ENCODE measurements at regions of chr1 and their contacts with region 1.

Region 1: GRCh38 chr1:205300886-205301821 is 20.4 kb downstream of the NUAK2 start:
- DNase-seq: peak; percentile 94
- ATAC-seq: peak; percentile 97
- H3K4me3 ChIP-seq: peak overlapping the region; percentile 11 to 59 (median 14)
- H3K27ac ChIP-seq: peak overlapping the region; percentile 74
- H3K4me1 ChIP-seq: peaks cover 54% of the 10 kb centered on the region
- H3K27me3 ChIP-seq: no peaks in the 10 kb centered on the region
- CTCF ChIP-seq: 0 out of 2 replicates have a peak, but pooled peaks have one; percentile 19
- EP300 ChIP-seq: peak; percentile 77 to 82
- POLR2A ChIP-seq: peak in 1 of 2 experiments; percentile 42; a peak in 1 of 4 replicates
- RAD21 ChIP-seq: peak; percentile 77

Region 2: DNA sequence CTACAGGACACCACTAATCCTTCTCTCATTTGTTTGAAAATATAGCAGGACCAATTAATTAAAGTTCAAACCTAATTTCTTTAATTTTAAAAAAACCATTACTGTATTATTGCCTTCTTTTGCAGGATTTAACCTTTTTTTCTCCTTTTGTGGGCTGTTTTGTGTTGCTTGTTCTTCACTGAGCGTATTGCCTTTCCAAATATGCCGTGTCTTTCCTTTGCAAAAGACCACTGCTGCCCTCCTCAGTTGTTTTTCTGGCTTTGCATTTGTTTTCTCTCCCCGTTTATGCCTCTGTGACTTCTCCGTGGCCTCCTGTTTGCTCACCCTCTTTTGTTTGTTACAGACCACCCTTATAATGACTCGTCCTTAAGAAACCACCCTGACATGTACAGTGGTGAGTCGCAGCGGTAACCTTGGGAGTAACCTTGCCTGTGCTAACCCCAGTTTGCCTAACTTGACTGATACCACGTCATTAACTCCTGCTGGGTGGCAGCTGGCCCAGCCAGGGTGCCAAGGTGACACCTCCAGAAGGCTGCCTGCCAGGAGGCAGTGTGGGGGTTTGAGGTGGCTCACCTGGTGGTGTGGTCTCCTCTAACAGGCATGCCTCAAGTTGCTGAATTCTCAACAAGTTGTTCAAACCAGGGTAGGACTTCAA is 339.3 kb before region 1 on chr1:
- CTCF ChIA-PET with region 1: no interaction called
- POLR2A ChIA-PET with region 1: no interaction called
- in situ Hi-C with region 1: no loop called
- intact Hi-C with region 1: no loop called
- DNase-seq: no peak
- ATAC-seq: no peak
- H3K4me3 ChIP-seq: no peak overlapping the region
- H3K27ac ChIP-seq: no peak overlapping the region
- H3K4me1 ChIP-seq: no peaks in the 10 kb centered on the region
- H3K27me3 ChIP-seq: peaks cover 2 to 44% of the 10 kb centered on the region in 2 experiments; a peak in 4 of 5 replicates
- CTCF ChIP-seq: peak; percentile 23; the same call in 1 of the 2 replicates
- EP300 ChIP-seq: no peak
- POLR2A ChIP-seq: no peak
- RAD21 ChIP-seq: no peak

Region 3: DNA sequence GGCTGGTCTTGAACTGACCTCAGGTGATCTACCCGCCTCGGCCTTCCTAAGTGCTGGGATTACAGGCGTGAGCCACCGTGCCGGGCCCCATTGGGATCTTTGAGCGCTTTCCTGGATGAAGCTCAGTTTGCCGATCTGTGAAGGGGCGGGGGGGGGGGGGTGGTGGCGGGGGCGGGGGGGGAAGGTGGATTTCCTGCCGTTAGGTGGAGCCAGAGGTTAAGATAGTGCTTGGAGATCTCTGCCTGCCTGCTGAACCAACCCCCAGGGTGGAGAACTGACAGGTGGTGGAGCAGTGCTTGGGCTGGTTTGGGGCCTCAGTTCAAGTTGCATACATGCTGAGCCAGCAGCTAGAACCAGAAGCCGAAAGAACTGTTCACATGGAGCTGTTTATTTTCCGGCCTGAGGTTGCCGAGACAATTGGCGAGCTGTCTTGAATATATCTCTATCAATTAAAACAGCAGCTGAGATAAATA is 71.7 kb before region 1 on chr1:
- CTCF ChIA-PET with region 1: no interaction called
- POLR2A ChIA-PET with region 1: no interaction called
- in situ Hi-C with region 1: no loop called
- intact Hi-C with region 1: no loop called
- DNase-seq: peak; percentile 42
- ATAC-seq: peak; percentile 74
- H3K4me3 ChIP-seq: peak overlapping the region in 1 of 3 experiments; percentile 78; a peak in 1 of 6 replicates
- H3K27ac ChIP-seq: no peak overlapping the region
- H3K4me1 ChIP-seq: peaks cover 30% of the 10 kb centered on the region
- H3K27me3 ChIP-seq: peaks cover 4 to 42% of the 10 kb centered on the region in 2 experiments; a peak in 4 of 5 replicates
- CTCF ChIP-seq: peak; percentile 58
- EP300 ChIP-seq: no peak
- POLR2A ChIP-seq: no peak
- RAD21 ChIP-seq: no peak

Region 4: GRCh38 chr1:205316161-205316566 is 15.0 kb after region 1 on chr1:
- CTCF ChIA-PET with region 1: no interaction called
- POLR2A ChIA-PET with region 1: interaction called, 46 read pairs
- in situ Hi-C with region 1: no loop called
- intact Hi-C with region 1: loop called (anchors 1 kb)
- DNase-seq: no peak
- ATAC-seq: no peak
- H3K4me3 ChIP-seq: no peak overlapping the region
- H3K27ac ChIP-seq: no peak overlapping the region
- H3K4me1 ChIP-seq: peaks cover 80% of the 10 kb centered on the region
- H3K27me3 ChIP-seq: no peaks in the 10 kb centered on the region; a peak in 1 of 5 replicates
- CTCF ChIP-seq: no peak
- EP300 ChIP-seq: no peak
- POLR2A ChIP-seq: no peak
- RAD21 ChIP-seq: no peak

Region 5: DNA sequence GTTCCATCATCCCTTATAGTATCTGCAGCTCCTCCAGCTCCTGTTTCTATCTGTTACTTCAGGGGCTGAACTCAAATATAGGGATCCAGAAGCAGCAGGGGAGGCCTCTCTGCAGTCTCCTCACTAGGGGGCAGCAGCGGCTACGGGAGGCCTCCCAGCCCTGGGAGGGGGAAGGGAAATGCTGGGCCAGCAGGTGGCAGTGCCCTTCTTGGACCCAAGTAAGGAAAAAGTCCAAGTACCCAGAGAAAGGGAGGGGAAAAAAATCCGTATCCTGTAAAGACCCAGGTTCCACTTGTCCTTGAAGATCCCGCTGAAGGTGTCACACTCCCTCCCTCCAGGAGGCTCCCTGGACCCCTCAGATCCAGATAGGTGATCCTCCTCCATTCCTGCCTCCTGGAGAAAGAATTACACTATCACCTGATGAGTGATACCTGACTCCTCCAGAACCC is 34.5 kb after region 1 on chr1:
- CTCF ChIA-PET with region 1: no interaction called
- POLR2A ChIA-PET with region 1: no interaction called
- in situ Hi-C with region 1: no loop called
- intact Hi-C with region 1: no loop called
- DNase-seq: peak; percentile 68
- ATAC-seq: peak; percentile 92
- H3K4me3 ChIP-seq: no peak overlapping the region
- H3K27ac ChIP-seq: no peak overlapping the region
- H3K4me1 ChIP-seq: no peaks in the 10 kb centered on the region
- H3K27me3 ChIP-seq: peaks cover 4 to 43% of the 10 kb centered on the region in 2 experiments
- CTCF ChIP-seq: peak; percentile 92
- EP300 ChIP-seq: no peak
- POLR2A ChIP-seq: no peak
- RAD21 ChIP-seq: peak; percentile 81

Measured in HepG2 (cell line).